Right cardiac atrium (tissue), 5 donors: ENCODE measurements at regions of chr13 and their contacts with region 1.

Region 1: GRCh38 chr13:30306762-30307193 is 573 bp downstream of the KATNAL1 start:
- DNase-seq: peak; percentile 95 to 97 (median 97)
- ATAC-seq: peak; percentile 97 to 98
- H3K4me3 ChIP-seq: peak overlapping the region; percentile 91
- H3K27ac ChIP-seq: peak overlapping the region; percentile 97
- H3K4me1 ChIP-seq: peaks cover 2% of the 10 kb centered on the region
- H3K27me3 ChIP-seq: no peaks in the 10 kb centered on the region

Region 2: GRCh38 chr13:30257468-30258099 is 49.2 kb before region 1 on chr13:
- intact Hi-C with region 1: loop called in 1 of 4 experiments (anchors 10 kb)
- DNase-seq: no peak
- ATAC-seq: peak in 1 of 2 donors; percentile 46
- H3K4me3 ChIP-seq: no peak overlapping the region
- H3K27ac ChIP-seq: peak overlapping the region; percentile 20
- H3K4me1 ChIP-seq: no peaks in the 10 kb centered on the region
- H3K27me3 ChIP-seq: no peaks in the 10 kb centered on the region